MCF 10A (cell line): ENCODE measurements at regions of chr2 and their contacts with region 1.

Region 1: DNA sequence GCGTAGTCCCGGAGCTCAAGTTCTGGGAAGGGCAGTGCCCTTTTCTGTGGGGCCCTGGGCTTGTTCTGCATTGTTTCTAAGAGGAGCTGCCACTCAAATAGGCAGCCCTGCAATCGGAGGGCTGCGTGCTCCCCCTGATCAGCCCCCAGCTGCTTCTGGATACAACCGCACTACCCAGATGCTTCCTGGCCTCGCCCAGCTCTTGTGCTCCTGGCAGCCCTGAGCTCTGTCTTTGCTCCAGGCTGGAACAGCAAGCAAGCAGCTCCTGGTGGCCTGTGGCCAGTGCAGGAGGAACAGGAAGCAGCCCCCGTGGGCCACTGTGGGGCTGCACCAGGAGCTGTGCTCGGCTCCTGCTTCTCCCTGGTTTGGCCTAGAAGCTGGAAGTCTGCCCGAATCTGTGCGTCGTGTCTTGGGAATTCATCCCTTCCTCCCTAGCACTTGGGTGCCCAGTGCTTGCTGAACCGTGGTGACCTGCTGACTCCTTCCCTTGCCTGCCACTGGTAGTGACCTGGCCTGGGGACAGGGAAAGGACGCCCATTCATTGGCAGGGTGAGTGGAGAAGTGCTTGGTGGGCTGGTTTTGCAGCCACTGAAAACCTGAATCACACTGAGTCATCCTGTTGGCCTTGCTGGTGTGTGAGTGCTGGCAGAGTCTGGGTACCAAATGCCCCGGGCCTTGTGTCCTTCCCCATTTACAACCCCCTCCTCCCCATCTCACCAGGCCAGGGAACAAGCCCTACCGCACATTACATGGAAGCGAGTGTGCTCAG is 27.3 kb upstream of the NTSR2 start:
- DNase-seq: peak; percentile 96
- H3K4me3 Mint-ChIP-seq: no peak overlapping the region
- H3K27ac Mint-ChIP-seq: peak overlapping the region; percentile 57
- H3K4me1 Mint-ChIP-seq: peaks cover 14% of the 10 kb centered on the region
- H3K27me3 Mint-ChIP-seq: no peaks in the 10 kb centered on the region
- CTCF ChIP-seq: no peak

Region 2: DNA sequence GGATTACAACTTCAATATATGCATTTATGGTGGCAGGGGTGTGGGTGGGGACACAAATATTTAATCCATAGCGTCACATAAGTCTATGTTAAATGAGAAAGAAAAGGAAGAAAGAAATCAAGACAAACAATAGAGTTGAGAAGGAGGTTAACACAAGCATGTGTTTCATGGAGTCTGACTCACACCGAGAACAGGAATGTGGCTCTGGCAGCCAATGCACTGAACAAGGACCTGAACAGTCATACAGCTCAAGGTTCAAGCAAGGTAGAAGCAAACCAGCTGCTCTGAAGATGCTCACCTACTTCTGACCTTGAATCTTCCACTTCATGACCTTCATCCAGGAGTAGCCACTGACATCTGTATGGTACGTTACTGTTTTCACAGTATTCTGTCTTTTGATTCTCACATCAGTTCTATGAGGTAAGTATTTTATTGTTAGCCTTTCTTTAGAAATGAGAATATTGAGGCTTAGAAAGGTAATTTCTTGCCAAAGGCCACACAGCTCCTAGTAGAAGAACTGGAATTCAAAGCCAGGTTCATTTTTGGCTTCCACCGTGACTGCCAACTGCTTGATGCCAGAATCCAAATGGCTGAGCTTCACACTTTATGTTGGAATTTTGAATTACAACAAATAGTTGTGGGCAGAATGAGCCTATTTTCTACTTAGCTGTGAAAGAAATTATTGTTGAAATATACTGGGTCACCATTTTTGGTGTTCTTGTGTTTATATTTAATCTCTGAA is 13.1 kb after region 1 on chr2:
- CTCF ChIA-PET with region 1: interaction called, 11 read pairs
- POLR2A ChIA-PET with region 1: interaction called, 11 read pairs
- intact Hi-C with region 1: no loop called
- DNase-seq: peak; percentile 74
- H3K4me3 Mint-ChIP-seq: no peak overlapping the region
- H3K27ac Mint-ChIP-seq: no peak overlapping the region
- H3K4me1 Mint-ChIP-seq: peaks cover 14% of the 10 kb centered on the region
- H3K27me3 Mint-ChIP-seq: no peaks in the 10 kb centered on the region
- CTCF ChIP-seq: no peak

Region 3: GRCh38 chr2:11743846-11744553 is 46.7 kb after region 1 on chr2:
- CTCF ChIA-PET with region 1: interaction called, 45 read pairs
- POLR2A ChIA-PET with region 1: interaction called, 67 read pairs
- intact Hi-C with region 1: no loop called
- DNase-seq: peak; percentile 99
- H3K4me3 Mint-ChIP-seq: peak overlapping the region; percentile 33
- H3K27ac Mint-ChIP-seq: peak overlapping the region; percentile 82
- H3K4me1 Mint-ChIP-seq: peaks cover 29% of the 10 kb centered on the region
- H3K27me3 Mint-ChIP-seq: no peaks in the 10 kb centered on the region
- CTCF ChIP-seq: no peak